Activated naive CD8-positive, alpha-beta T cell treated with anti-CD3 and anti-CD28 coated beads, Interleukin-2, amount 10 ng/mL, durations not matched to agents 7 days and 5 days (primary cell): ENCODE measurements at regions of chr19 and their contacts with region 1.

Region 1: DNA sequence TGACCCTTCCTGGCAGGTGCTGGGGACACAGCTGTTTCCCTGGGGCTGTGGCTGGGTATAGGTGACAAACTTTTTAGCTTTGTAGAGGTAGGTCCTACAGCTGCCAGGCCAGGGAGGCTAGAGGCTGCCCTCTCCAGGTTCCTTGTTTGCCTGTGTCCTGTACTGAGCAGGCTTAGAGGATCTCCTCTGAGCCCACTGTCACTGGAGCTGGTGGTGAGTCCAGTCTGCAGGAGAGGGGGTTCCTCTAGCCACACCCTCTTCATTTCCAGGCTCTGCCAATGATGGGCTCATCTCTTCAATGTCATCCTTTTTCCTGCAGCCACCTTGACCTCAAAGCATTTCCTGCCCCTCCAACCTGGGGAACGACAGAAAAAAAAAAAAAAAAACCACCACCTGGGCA is 12.6 kb upstream of the RAB11B start:
- DNase-seq: no peak
- ATAC-seq: peak; percentile 56
- H3K4me3 Mint-ChIP-seq: no peak overlapping the region
- H3K27ac Mint-ChIP-seq: no peak overlapping the region
- H3K4me1 Mint-ChIP-seq: peaks cover 12% of the 10 kb centered on the region
- H3K27me3 Mint-ChIP-seq: peaks cover 2% of the 10 kb centered on the region

Region 2: DNA sequence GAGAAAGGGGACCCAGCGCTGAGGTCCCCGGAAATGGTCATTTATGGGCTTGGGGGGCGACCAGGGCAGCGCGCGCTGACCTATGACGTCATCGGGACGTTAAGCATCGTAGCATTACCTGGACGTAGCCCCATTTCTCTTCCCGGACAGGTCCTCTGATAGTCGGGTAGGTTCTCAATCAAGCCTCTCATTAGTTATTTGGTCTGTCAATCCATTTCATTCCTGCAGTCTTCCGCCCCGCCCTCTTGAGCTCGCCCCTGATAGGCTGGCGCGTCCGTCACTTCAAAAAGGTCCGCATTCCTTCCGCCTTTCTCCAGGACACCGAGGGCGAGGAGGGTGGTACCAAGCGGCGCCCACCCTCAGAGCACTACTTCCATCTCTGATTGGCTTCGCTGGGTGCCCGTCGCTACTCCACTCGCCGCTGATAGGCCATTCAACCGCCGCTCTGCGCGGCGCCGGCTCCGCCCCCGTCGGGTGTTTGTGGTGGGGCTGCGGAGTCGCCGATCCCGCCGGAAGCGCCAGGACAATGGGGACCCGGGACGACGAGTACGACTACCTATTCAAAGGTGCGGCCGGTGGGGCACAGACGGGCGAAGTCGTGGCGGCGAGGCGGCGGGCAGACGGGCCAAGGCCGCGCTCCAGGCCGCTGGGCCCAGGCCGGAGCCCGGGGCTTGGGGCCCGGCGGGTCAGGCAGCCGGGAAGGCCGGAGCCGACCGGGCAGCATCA is 12.5 kb after region 1 on chr19 and contains the start of gene RAB11B:
- POLR2A ChIA-PET with region 1: interaction called, 11 read pairs
- DNase-seq: peak; percentile 92
- ATAC-seq: peak; percentile 94
- H3K4me3 Mint-ChIP-seq: peak within 1 kb of the TSS; percentile 82
- H3K27ac Mint-ChIP-seq: peak within 1 kb of the TSS; percentile 98
- H3K4me1 Mint-ChIP-seq: peaks cover 18% of the 10 kb centered on the region
- H3K27me3 Mint-ChIP-seq: no peaks in the 10 kb centered on the region
- total RNA-seq, gene RAB11B: 98.8 to 103 TPM